ENCODE measurements at regions of chr21 and their contacts with region 1.

Region 1: DNA sequence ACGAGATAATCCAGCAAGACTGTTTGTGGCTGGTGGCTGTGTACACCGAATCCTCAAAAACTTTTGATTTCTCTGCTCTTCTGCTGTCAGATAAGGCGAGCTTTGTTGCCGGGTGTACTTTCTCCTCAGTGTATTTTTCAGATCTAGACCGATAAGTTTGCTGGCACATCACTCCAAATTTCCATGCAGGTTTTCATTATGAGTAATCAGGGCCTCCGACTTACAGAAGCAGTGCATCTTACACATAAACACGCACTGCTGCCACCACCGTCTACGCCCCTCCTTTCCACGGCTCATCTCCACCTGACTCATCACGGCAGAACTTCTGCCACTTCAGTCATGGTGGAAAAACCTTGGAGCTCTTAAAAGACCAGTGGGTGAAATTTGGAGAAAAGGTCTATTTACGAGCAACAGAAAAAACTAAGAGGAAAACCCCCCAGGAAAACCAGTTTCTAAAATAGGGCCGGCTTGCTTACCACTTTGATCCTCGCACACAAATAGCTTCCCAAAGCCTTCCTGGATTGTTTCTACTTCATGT is 7.7 kb downstream of the ZBTB21 start:
- DNase-seq: peak; percentile 98
- ATAC-seq: peak; percentile 94
- H3K4me3 ChIP-seq: no peak overlapping the region; the same call in 1 of the 2 replicates
- H3K27ac ChIP-seq: peak overlapping the region; percentile 68
- H3K4me1 ChIP-seq: peaks cover 15% of the 10 kb centered on the region
- H3K27me3 ChIP-seq: no peaks in the 10 kb centered on the region
- CTCF ChIP-seq: no peak
- POLR2A ChIP-seq: no peak
- RAD21 ChIP-seq: peak; percentile 14

Region 2: DNA sequence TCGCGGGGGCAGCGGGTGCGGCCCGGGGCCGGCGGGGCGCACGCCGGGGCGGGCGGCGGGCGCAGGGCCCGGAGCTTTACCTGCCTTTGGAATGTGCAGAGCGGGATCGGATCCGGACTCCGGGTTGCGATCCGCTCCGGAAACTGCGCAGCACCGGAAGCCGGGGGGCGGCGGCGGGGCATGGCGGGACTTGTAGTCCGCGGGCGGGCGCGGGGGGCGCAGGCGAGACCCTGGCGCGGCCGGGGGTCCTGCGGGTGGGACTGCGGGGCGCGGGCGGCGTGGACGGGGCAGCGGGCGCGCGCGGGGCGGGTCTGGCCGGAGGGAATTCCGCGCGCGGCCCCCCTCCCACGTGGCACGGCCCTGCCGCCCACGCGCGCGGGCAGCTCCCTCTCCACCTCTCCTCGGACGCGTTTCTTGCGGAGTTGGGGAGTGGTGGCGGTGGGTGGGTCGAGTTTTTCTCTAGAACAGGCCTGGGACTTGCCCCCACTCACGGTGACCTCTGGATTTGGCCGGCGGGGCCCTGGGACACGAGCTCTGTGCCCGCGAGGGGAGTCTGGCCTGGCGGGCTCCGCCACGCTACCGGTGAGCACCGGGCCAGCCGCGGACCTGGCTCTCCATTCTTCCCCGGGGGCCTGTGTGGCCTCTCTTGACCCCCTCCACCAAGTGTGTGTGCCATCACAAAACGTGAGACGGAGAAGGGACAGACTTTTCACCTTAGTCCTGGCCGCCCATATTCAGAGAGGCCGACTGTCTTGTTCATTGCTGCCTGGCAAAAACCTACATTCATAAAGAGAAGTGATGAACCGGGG is 123.1 kb before region 1 on chr21 and contains the start of gene PRDM15:
- CTCF ChIA-PET with region 1: no interaction called
- POLR2A ChIA-PET with region 1: no interaction called
- dilution Hi-C with region 1: no loop called
- in situ Hi-C with region 1: no loop called
- intact Hi-C with region 1: no loop called
- DNase-seq: peak; percentile 82
- ATAC-seq: peak; percentile 88
- H3K4me3 ChIP-seq: peak within 1 kb of the TSS; percentile 88
- H3K27ac ChIP-seq: peak within 1 kb of the TSS; percentile 99
- H3K4me1 ChIP-seq: peaks cover 3% of the 10 kb centered on the region
- H3K27me3 ChIP-seq: no peaks in the 10 kb centered on the region
- CTCF ChIP-seq: no peak
- POLR2A ChIP-seq: 0 out of 2 replicates have a peak, but pooled peaks have one; percentile 31
- RAD21 ChIP-seq: no peak
- total RNA-seq, gene PRDM15: 5.6 and 8.8 TPM in 2 replicates

Region 3: GRCh38 chr21:41953831-41954653 is 48.4 kb before region 1 on chr21 and contains the start of gene C2CD2:
- CTCF ChIA-PET with region 1: no interaction called
- POLR2A ChIA-PET with region 1: no interaction called
- dilution Hi-C with region 1: no loop called
- in situ Hi-C with region 1: no loop called
- intact Hi-C with region 1: loop called (anchors 2 kb)
- DNase-seq: peak; percentile 73
- ATAC-seq: peak; percentile 89
- H3K4me3 ChIP-seq: peak within 1 kb of the TSS; percentile 92
- H3K27ac ChIP-seq: peak within 1 kb of the TSS; percentile 63; the same call in 1 of the 2 replicates
- H3K4me1 ChIP-seq: peaks cover 26% of the 10 kb centered on the region
- H3K27me3 ChIP-seq: no peaks in the 10 kb centered on the region
- CTCF ChIP-seq: no peak
- POLR2A ChIP-seq: peak; percentile 83
- RAD21 ChIP-seq: no peak
- total RNA-seq, gene C2CD2: 19.4 and 25.3 TPM in 2 replicates

Region 4: GRCh38 chr21:41961282-41961701 is 41.2 kb before region 1 on chr21:
- CTCF ChIA-PET with region 1: no interaction called
- POLR2A ChIA-PET with region 1: no interaction called
- dilution Hi-C with region 1: no loop called
- in situ Hi-C with region 1: loop called (anchors 5 kb)
- intact Hi-C with region 1: loop called (anchors 2 kb)
- DNase-seq: peak; percentile 90
- ATAC-seq: peak; percentile 25; the same call in 1 of the 2 replicates
- H3K4me3 ChIP-seq: no peak overlapping the region
- H3K27ac ChIP-seq: no peak overlapping the region
- H3K4me1 ChIP-seq: peaks cover 14% of the 10 kb centered on the region
- H3K27me3 ChIP-seq: 0 out of 2 replicates have a peak, but pooled peaks cover 1% of the 10 kb centered on the region
- CTCF ChIP-seq: no peak
- POLR2A ChIP-seq: 0 out of 2 replicates have a peak, but pooled peaks have one; percentile 9
- RAD21 ChIP-seq: no peak; the same call in 1 of the 2 replicates

Region 5: DNA sequence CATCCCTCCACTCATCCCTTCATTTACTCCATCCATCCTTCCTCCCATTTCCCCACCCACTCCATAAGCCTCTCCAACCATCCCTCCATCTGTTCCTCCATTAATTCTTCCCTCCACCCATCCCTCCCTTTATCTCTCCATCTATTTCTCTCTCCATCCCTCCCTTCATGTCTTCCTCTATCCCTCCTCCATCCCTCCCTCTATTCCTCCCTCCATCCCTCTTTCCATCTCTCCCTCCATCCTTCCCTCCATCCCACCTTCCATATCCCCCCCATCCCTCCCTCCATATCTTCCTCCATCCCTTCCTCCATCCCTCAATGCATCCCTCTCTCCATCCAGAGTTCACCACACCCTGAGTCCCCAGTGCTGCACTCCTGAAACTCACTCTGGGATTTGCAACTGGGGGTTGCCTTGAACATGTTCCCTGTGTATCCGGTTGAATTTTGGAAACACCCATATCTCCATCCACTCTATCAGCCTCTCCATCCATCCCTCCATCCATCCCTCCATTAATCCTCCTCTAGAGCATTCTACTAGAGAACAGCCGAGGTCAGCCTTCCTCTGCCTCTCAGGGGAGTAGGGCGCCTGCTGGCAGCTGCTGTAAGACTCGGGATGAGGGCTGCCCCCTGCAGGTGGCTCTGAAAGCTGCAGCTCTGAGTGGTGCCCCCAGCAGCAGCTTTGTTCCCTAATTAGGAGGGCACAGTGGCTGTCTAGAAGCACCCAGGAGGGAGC is 255.8 kb after region 1 on chr21:
- CTCF ChIA-PET with region 1: no interaction called
- POLR2A ChIA-PET with region 1: no interaction called
- dilution Hi-C with region 1: no loop called
- in situ Hi-C with region 1: no loop called
- intact Hi-C with region 1: no loop called
- DNase-seq: peak; percentile 32
- ATAC-seq: peak; percentile 66
- H3K4me3 ChIP-seq: no peak overlapping the region
- H3K27ac ChIP-seq: no peak overlapping the region
- H3K4me1 ChIP-seq: peaks cover 21% of the 10 kb centered on the region; the same call in 1 of the 2 replicates
- H3K27me3 ChIP-seq: peaks cover 20% of the 10 kb centered on the region; the same call in 1 of the 2 replicates
- CTCF ChIP-seq: peak; percentile 59
- POLR2A ChIP-seq: no peak
- RAD21 ChIP-seq: peak; percentile 58